ENCODE measurements at regions of chr2 and their contacts with region 1.

Region 1: DNA sequence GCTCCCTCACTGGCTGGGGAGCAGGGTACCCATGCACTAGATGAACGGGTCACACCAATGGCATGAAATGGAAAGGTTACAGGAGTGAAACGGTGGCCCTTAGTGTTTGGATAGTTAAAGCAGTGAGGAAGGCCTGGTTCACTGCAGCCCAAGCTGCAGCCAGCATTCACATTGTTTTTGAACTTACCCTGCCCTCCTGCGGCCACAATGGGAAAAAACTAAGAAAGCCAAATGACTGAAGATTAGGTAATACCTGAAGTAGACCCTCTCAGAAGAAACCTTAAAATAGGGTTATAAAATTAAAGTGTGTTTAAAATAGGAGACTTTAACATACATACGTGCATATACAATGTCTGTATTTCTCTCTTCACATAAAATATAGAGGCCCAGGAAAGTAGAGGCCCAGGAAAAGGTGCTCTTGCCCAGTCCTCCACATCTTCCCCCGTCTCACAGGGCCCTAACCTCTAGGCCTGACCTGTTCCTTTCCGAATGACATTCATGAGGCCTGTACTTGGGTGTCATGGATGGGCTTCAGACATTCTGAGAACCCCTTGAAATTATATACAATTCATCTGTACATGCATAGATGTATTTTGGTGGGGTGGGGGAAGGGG is 33.3 kb downstream of the DOK1 start:
- DNase-seq: peak; percentile 79
- H3K4me3 Mint-ChIP-seq: no peak overlapping the region
- H3K27ac Mint-ChIP-seq: no peak overlapping the region
- H3K4me1 Mint-ChIP-seq: peaks cover 28% of the 10 kb centered on the region
- H3K27me3 Mint-ChIP-seq: peaks cover 9% of the 10 kb centered on the region

Region 2: DNA sequence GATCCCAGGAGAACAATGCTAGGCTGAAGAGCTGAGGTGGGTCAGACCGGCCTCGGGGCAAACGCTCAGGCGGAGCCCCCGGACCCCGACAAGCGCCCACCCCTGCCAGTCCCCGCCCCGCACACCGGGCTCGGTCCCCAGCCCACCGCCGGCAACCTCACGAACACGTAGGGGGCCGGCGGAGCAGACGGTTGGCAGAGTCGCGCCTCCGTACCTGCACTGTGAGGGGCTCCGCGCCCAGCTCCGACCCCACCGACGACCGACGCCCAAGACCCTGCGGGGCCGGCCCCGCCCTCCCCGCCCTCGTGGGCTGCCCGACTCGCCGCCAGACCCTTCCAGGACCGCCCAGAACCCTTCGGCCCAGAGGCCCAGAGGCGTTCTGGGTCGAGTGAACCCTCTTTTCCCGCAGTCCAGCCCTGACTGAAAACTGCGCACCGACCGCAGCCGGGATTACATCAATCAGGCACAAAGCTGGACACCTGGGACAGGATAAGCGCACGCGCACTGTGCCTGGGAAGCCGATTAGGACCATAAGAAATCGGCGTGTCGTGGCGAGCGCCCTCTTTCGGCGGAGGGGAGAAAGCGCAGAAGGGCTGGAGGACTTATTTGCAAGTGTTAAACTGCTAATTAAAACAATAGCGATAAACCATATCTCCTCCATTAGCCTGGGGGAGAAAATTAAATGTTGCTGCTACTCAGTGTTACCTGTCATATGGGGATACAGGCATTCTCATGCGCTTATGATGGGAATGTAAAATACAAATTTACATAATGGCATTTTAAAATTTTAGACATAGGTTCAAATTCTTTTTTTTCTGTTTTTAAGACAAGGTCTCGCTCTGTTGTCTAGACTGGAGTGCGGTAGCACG is 196.0 kb before region 1 on chr2:
- CTCF ChIA-PET with region 1: interaction called, 3 read pairs
- intact Hi-C with region 1: loop called (anchors 5 kb)
- DNase-seq: peak; percentile 98
- H3K4me3 Mint-ChIP-seq: peak overlapping the region; percentile 92
- H3K27ac Mint-ChIP-seq: peak overlapping the region; percentile 96
- H3K4me1 Mint-ChIP-seq: peaks cover 4% of the 10 kb centered on the region
- H3K27me3 Mint-ChIP-seq: no peaks in the 10 kb centered on the region

Region 3: GRCh38 chr2:74498500-74499266 is 89.1 kb before region 1 on chr2:
- CTCF ChIA-PET with region 1: interaction called, 24 read pairs
- intact Hi-C with region 1: loop called (anchors 1 kb)
- DNase-seq: peak; percentile 45
- H3K4me3 Mint-ChIP-seq: peak overlapping the region; percentile 67
- H3K27ac Mint-ChIP-seq: no peak overlapping the region
- H3K4me1 Mint-ChIP-seq: peaks cover 34% of the 10 kb centered on the region
- H3K27me3 Mint-ChIP-seq: peaks cover 59% of the 10 kb centered on the region

Region 4: GRCh38 chr2:74538881-74539339 is 48.9 kb before region 1 on chr2:
- CTCF ChIA-PET with region 1: interaction called, 50 read pairs
- intact Hi-C with region 1: no loop called
- DNase-seq: no peak
- H3K4me3 Mint-ChIP-seq: no peak overlapping the region
- H3K27ac Mint-ChIP-seq: no peak overlapping the region
- H3K4me1 Mint-ChIP-seq: no peaks in the 10 kb centered on the region
- H3K27me3 Mint-ChIP-seq: peaks cover 25% of the 10 kb centered on the region

Region 5: GRCh38 chr2:74566754-74567085 is 21.1 kb before region 1 on chr2:
- CTCF ChIA-PET with region 1: interaction called, 144 read pairs
- intact Hi-C with region 1: loop called (anchors 1 kb)
- DNase-seq: no peak
- H3K4me3 Mint-ChIP-seq: peak overlapping the region; percentile 31
- H3K27ac Mint-ChIP-seq: peak overlapping the region; percentile 87
- H3K4me1 Mint-ChIP-seq: peaks cover 35% of the 10 kb centered on the region
- H3K27me3 Mint-ChIP-seq: peaks cover 11% of the 10 kb centered on the region

Region 6: GRCh38 chr2:74632209-74632938 is 44.6 kb after region 1 on chr2:
- CTCF ChIA-PET with region 1: no interaction called
- intact Hi-C with region 1: no loop called
- DNase-seq: no peak
- H3K4me3 Mint-ChIP-seq: no peak overlapping the region
- H3K27ac Mint-ChIP-seq: no peak overlapping the region
- H3K4me1 Mint-ChIP-seq: no peaks in the 10 kb centered on the region
- H3K27me3 Mint-ChIP-seq: no peaks in the 10 kb centered on the region

Region 7: GRCh38 chr2:74768401-74768914 is 180.7 kb after region 1 on chr2:
- CTCF ChIA-PET with region 1: no interaction called
- intact Hi-C with region 1: no loop called
- DNase-seq: no peak
- H3K4me3 Mint-ChIP-seq: no peak overlapping the region
- H3K27ac Mint-ChIP-seq: no peak overlapping the region
- H3K4me1 Mint-ChIP-seq: peaks cover 14% of the 10 kb centered on the region
- H3K27me3 Mint-ChIP-seq: no peaks in the 10 kb centered on the region

Region 8: GRCh38 chr2:74876081-74876886 is 288.5 kb after region 1 on chr2:
- CTCF ChIA-PET with region 1: interaction called, 5 read pairs
- intact Hi-C with region 1: loop called (anchors 5 kb)
- DNase-seq: peak; percentile 62
- H3K4me3 Mint-ChIP-seq: no peak overlapping the region
- H3K27ac Mint-ChIP-seq: no peak overlapping the region
- H3K4me1 Mint-ChIP-seq: no peaks in the 10 kb centered on the region
- H3K27me3 Mint-ChIP-seq: no peaks in the 10 kb centered on the region